Right ventricle myocardium inferior (tissue), 1 donor: ENCODE measurements at regions of chr3 and their contacts with region 1.

Region 1: DNA sequence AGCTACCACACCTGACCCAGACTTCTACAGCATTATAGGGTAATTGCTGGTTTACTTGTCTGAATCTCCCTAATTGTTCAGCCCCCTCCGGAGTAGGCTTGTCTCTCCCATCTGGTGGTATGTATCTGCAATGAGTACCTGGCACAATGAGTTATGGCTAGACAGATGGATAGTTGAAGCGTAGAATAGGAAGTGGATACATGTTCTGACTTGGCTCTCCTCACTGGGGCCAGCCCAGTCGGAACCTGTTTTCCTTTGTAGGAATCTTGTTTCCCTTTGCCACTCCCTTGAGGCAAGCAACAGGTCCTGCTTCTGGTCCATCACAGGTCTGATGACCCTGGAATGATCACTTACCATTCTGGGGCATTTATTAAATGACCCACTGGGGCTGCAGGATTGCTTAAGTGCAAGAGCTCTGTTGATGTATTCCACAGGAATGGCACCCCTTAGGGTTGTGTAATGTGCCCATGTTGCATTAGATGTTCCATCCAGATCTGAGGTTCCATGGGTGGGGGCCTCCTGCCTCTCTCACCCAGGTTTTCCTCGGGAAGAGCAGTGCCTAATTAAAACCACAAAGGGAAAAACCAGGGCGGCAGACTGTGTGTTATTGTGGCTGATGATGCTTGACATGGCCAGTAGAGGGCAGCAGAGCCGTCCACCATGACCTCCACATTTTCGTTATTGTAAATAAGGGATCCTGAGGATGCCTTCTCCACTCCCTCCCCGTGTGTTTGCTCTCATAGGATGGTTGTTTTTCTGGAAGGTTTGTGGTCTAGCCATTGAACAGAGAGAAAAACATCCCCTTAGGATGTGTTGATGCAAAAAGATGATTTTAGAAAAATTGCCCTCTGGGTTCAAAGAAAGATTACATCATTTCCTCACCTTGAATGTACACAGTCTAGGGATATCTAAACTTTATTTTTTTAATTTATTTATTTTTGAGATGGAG is 58.0 kb downstream of the CMTM8 start:
- DNase-seq: no peak
- ATAC-seq: peak; percentile 81

Region 2: DNA sequence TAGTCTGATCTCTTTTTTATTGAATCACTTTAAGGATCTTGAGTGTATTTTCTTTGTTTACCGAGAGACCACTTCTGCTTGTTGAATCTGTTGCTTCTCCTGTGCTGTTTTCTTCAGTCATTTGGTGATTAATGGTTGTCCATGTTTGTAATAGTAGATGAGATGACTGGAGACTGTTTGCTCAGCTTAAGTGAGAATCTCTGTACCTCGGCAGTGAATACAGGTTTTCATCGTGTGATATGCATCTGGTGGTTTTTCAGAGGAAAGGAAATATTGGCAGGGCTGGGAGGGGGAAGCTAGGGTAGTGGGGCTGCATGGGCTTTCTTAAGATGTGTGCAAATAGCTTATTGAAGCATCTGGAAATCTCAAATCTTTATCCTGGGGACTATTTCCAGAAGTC is 38.9 kb before region 1 on chr3:
- intact Hi-C with region 1: no loop called
- DNase-seq: no peak
- ATAC-seq: no peak

Region 3: DNA sequence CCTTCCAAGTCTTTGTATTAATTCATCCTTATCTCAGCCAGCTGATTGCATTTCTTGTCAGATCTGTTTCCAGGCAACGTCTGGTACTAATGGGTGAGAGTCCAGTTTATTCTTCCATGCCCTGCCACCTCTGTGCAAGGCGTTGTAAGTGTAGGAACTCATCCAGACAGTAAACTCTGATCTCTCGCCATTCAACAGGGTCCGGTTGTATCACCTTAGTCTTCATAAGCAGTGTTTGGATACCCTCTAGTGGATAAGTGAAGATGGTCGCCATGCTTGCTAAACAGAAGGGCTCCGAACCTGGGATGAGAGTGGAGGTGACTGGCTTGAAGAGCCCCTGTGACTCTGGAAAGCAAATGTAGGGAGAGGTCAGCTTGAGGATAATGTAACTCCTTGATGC is 43.5 kb after region 1 on chr3:
- intact Hi-C with region 1: loop called (anchors 2 kb)
- DNase-seq: no peak
- ATAC-seq: peak; percentile 73

Region 4: DNA sequence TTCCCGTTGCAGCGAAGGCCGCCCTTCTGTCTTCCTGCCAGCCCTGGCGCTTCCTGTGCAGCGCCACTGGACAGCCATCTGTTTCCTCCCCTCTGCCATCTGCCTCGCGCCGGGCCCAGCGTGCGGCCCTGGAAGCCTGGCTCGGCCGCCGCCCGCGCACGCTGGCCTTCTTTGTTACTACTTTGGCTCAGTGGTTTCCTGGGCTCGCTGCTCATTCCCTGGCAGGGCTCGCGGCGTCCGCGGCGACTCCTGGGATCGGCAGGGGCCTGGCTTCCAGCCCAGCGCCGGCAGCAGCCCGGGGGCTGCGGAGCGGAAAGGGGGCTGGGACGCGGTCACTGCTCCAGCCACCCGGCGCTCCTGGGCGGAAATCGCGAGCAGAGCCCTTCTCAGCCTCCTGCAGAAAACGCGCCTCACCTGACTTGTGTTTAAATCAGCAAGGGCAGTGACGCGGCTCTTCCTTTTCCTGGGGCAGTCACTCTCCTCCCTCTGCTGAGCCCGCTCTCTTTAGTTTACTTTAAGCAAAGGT is 105.1 kb after region 1 on chr3:
- intact Hi-C with region 1: loop called (anchors 5 kb)
- DNase-seq: peak; percentile 93
- ATAC-seq: peak; percentile 92

Region 5: DNA sequence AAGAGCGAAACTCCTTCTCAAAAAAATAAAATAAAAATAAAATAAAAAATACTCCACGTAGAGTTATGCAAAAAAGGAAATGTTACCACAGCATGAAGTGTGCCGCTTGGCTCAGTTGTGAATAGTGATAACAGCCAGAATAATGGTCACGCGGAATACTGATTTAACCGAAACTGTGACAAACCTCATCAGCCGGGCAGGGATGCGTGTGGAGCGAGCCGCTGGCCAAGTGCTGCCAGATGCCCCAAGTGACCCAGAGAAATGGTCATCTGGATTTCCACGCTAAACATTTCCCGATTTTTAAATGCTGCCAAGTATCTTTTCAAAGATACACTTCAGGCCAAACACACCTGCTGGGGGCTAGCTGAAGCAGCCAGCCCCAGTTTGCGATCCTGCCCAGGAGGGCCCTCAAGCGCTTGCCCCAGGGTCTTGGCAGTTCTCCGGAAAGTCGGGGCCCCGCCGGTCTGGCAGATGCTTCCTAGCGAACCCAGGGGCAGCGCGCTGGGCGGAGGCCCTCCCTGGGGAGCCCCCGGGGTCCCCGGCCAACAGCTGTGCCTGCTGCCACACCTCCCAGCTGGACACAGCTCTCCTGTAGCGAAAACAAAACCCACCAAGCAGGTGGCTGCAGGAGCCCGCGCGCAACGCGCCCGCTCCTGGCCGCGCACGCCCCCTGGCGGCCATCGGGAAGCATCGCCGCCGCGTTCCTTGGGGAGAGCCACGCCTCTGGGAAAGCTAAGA is 171.0 kb after region 1 on chr3:
- intact Hi-C with region 1: loop called (anchors 10 kb)
- DNase-seq: peak; percentile 91
- ATAC-seq: peak; percentile 94